ENCODE measurements at regions of chr17 and their contacts with region 1.

Region 1: GRCh38 chr17:67376737-67377487 is at the start of gene PITPNC1:
- DNase-seq: peak; percentile 79
- H3K4me3 Mint-ChIP-seq: peak within 1 kb of the TSS; percentile 76
- H3K27ac Mint-ChIP-seq: no peak within 1 kb of the TSS
- H3K4me1 Mint-ChIP-seq: peaks cover 19% of the 10 kb centered on the region
- H3K27me3 Mint-ChIP-seq: no peaks in the 10 kb centered on the region
- CTCF ChIP-seq: no peak
- total RNA-seq, gene PITPNC1: 6.9 and 11.4 TPM in 2 replicates

Region 2: DNA sequence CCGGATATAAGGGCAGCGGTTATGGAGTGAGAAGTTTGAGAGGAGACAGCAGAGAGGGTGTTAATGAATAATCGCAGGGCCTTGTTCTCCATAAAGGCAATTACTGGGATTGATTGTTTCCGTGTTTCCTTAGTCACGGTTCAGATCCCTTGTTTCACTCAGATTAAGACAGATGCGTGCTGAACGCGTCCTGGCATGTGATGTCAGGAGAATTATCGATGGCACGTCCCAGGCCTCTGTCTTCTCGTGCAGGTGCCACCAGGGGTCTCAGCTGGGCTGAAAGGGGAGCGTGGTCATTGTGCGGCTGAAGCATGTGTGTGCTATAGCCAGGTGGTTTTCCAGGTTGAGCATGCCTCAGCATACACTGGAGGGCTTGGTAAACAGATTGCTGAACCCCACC is 198.4 kb after region 1 on chr17:
- CTCF ChIA-PET with region 1: no interaction called
- intact Hi-C with region 1: no loop called
- DNase-seq: peak; percentile 73
- H3K4me3 Mint-ChIP-seq: no peak overlapping the region
- H3K27ac Mint-ChIP-seq: peak overlapping the region; percentile 79
- H3K4me1 Mint-ChIP-seq: peaks cover 17% of the 10 kb centered on the region
- H3K27me3 Mint-ChIP-seq: peaks cover 22% of the 10 kb centered on the region
- CTCF ChIP-seq: peak; percentile 24

Region 3: DNA sequence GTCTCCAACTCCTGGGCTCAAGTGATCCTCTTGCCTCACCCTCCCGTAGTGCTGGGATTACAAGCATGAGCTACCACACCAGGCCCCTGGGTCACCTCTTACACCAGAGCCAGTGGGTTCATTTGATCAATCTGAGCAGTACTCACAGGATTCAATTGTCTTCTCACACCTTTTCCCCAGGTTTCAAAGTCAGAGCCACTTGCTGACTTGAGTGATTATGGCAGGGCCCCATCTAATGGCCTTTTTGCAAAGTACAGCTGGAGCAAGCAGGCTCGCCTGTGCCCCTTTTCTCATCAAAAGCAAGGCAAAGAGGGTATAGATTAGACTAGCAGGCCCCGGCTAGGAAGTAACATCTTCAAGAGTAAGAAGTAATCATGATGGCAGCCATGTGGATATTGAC is 226.0 kb after region 1 on chr17:
- CTCF ChIA-PET with region 1: interaction called, 4 read pairs
- intact Hi-C with region 1: loop called (anchors 5 kb)
- DNase-seq: peak; percentile 57
- H3K4me3 Mint-ChIP-seq: no peak overlapping the region
- H3K27ac Mint-ChIP-seq: no peak overlapping the region
- H3K4me1 Mint-ChIP-seq: peaks cover 28% of the 10 kb centered on the region
- H3K27me3 Mint-ChIP-seq: no peaks in the 10 kb centered on the region
- CTCF ChIP-seq: peak; percentile 32

Region 4: DNA sequence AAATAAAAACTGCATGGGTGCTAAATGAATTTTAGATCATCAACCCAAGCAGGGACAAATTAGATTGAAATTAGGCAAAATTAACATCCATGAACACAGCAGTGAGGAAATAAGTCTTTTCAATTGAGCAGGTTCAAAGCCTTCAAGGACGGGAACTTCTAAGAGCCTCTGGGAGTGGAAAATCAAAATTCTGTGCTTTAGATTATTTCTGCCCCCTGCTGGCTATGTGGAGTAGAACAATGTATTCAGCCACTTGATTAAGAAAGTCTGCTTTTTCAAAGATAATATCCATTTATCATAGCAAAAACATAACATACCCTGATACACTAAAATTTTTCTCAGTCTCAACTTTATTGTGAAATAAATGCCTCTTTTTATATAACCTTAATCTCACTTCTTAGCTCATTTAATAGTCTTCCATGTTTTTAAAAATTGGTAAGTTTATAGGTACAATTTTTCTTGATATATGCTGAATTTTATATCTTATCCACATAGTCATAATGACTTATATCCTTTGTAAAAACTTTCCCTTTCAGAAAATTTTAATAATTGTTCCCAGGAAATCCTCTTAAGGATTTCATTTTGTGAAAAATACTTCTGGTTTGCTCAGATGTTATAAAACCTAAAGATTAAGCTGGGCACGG is 312.7 kb after region 1 on chr17:
- CTCF ChIA-PET with region 1: interaction called, 7 read pairs
- intact Hi-C with region 1: loop called (anchors 2 kb)
- DNase-seq: peak; percentile 53
- H3K4me3 Mint-ChIP-seq: no peak overlapping the region
- H3K27ac Mint-ChIP-seq: no peak overlapping the region
- H3K4me1 Mint-ChIP-seq: no peaks in the 10 kb centered on the region
- H3K27me3 Mint-ChIP-seq: no peaks in the 10 kb centered on the region
- CTCF ChIP-seq: peak; percentile 65

Measured in Calu3 (cell line).